ENCODE measurements at regions of chr1 and their contacts with region 1.

Region 1: DNA sequence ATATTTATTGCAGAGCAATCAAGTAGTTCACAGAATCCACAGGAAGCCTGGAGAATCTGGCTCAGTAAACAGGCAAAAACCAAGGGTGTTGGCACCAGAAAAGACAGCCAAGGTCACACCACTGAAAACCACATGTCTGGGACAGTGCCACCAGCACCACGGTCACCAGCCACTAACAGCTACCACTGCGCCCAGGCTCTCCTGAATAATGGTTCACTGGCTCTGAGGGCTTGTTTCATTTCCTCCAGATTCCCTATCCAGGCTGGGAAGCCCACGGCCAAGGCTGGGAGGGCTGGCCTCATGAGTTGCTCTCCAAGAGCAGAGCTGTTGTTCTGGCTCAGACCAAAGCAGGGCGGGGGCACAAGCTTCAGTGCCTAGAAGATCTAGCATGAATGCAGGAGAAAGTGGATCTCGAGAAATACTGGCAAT is 54.5 kb upstream of the PTGFRN start:
- DNase-seq: peak; percentile 37
- H3K4me3 ChIP-seq: no peak overlapping the region
- H3K27ac ChIP-seq: peak overlapping the region in 1 of 2 experiments; percentile 87; a peak in 2 of 4 replicates
- H3K4me1 ChIP-seq: peaks cover 28 to 36% of the 10 kb centered on the region in 2 experiments
- H3K27me3 ChIP-seq: no peaks in the 10 kb centered on the region
- CTCF ChIP-seq: no peak
- EP300 ChIP-seq: no peak
- RAD21 ChIP-seq: no peak

Region 2: DNA sequence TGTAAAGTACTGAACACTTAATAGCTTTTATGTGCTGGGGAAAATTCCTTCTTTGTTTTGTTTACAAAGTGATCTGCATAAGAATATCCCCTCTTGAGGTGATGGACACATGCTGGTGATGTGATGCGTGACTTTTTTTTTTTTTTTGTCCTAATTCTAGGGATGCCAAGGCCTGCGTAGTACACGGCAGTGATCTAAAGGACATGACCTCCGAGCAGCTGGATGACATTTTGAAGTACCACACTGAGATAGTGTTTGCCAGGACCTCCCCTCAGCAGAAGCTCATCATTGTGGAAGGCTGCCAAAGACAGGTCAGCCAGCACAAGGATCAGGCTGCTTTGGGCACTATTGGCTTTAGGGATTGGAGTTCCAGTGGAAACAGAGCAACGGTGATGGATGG is 457.5 kb before region 1 on chr1:
- CTCF ChIA-PET with region 1: no interaction called
- POLR2A ChIA-PET with region 1: no interaction called
- DNase-seq: no peak
- H3K4me3 ChIP-seq: no peak overlapping the region
- H3K27ac ChIP-seq: no peak overlapping the region
- H3K4me1 ChIP-seq: no peaks in the 10 kb centered on the region
- H3K27me3 ChIP-seq: no peaks in the 10 kb centered on the region
- CTCF ChIP-seq: no peak
- EP300 ChIP-seq: no peak
- RAD21 ChIP-seq: no peak

Region 3: DNA sequence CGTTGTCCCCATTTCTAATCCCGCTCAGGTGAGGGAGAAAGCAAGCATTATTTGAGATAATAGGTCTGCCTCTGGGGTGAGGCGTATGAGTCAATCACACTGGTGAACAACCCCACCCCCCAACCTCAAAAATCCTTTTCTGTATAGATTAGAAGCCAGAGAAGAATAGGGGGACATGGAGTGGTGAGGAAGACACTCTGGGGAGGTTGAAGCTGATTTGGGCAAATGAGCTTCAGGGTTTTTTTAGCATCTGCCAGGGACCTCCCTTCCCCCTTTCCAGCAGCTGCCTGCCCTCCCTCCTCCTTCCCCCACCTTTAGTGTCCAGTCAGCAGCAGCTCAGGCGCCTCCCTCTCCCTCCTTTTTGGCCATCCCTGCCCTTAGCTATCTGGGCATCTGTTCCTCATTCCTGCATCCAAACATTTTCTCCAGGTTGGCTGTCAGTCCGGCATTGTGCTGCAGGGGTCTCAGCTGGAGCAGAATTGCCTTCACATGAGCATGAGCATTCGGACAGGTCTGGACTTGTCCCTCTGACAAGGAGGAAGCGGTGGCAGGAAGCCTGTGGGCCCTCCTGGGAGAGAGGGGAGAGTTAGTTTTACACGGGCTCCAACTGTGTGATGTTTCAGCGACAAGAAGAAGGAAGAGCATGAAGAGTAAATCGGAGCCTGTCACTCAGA is 23.7 kb after region 1 on chr1:
- CTCF ChIA-PET with region 1: interaction called, 10 read pairs
- POLR2A ChIA-PET with region 1: interaction called, 12 read pairs
- DNase-seq: peak; percentile 71
- H3K4me3 ChIP-seq: peak overlapping the region; percentile 41 to 56
- H3K27ac ChIP-seq: peak overlapping the region; percentile 80 to 99
- H3K4me1 ChIP-seq: peaks cover 14 to 22% of the 10 kb centered on the region in 2 experiments
- H3K27me3 ChIP-seq: no peaks in the 10 kb centered on the region
- CTCF ChIP-seq: no peak
- EP300 ChIP-seq: peak in 1 of 2 experiments; percentile 46; a peak in 1 of 4 replicates
- RAD21 ChIP-seq: peak; percentile 61

Region 4: GRCh38 chr1:116951200-116951935 is 96.2 kb after region 1 on chr1:
- CTCF ChIA-PET with region 1: no interaction called
- POLR2A ChIA-PET with region 1: no interaction called
- DNase-seq: no peak
- H3K4me3 ChIP-seq: no peak overlapping the region
- H3K27ac ChIP-seq: no peak overlapping the region
- H3K4me1 ChIP-seq: peaks cover 0 to 17% of the 10 kb centered on the region in 2 experiments; a peak in 2 of 4 replicates
- H3K27me3 ChIP-seq: no peaks in the 10 kb centered on the region
- CTCF ChIP-seq: no peak
- EP300 ChIP-seq: no peak
- RAD21 ChIP-seq: no peak

Region 5: DNA sequence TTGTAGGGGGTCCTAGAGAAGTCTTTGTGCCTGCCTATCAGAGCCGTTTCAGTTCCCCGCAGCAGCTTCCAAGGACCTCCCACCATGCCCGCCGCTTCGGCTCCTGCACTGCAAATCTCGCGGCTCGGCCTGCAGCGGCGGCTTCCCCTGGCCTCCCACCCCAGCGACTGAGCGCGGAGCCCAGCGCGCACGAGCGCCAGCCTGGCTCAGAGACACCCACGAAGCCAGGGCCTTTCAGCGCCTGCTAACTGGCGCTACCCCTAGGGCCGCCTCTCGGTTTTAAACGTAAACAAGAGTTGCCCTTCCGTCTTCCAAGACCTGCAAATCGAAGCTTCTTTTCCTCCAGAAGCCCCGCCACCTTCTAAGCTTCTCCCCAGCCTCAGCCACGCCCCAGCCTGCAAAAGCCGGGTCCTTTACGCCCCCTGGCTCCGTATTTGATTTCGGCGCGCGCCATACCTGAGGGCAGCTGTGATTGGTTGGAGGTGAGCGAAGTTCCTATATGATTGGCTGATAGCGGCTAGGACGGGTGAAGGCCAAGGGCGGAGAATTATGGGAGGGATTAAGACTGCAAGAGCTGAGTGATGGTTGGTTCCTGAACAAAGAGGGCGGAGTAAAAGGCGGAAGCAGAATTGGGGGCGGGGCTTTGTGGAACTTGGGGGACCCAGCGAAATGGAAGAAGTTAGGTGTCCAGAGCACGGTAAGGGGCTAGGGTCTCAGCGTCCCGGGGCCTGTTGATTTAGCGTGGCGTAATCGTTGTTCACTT is 204.7 kb after region 1 on chr1 and contains the start of gene TTF2:
- CTCF ChIA-PET with region 1: interaction called, 11 read pairs
- POLR2A ChIA-PET with region 1: interaction called, 5 read pairs
- DNase-seq: peak; percentile 96
- H3K4me3 ChIP-seq: peak within 1 kb of the TSS; percentile 76 to 91
- H3K27ac ChIP-seq: peak within 1 kb of the TSS; percentile 53 to 83; a peak in 3 of 4 replicates
- H3K4me1 ChIP-seq: peaks cover 7 to 13% of the 10 kb centered on the region in 2 experiments; a peak in 3 of 4 replicates
- H3K27me3 ChIP-seq: no peaks in the 10 kb centered on the region
- CTCF ChIP-seq: no peak
- EP300 ChIP-seq: no peak
- RAD21 ChIP-seq: no peak
- polyA plus RNA-seq, gene TTF2: 10.8 and 12.2 TPM in 2 replicates

Measured in SK-N-SH (cell line).